GM12878 (cell line): ENCODE measurements at regions of chr2 and their contacts with region 1.

Region 1: GRCh38 chr2:72745679-72746368 is 80.0 kb downstream of the EXOC6B start:
- DNase-seq: no peak
- ATAC-seq: peak; percentile 52; the same call in 2 of the 3 replicates
- H3K4me3 ChIP-seq: no peak overlapping the region
- H3K27ac ChIP-seq: no peak overlapping the region
- H3K4me1 ChIP-seq: no peaks in the 10 kb centered on the region
- H3K27me3 ChIP-seq: no peaks in the 10 kb centered on the region
- CTCF ChIP-seq: peak; percentile 50 to 62 (median 58); a peak in 5 of 6 replicates
- EP300 ChIP-seq: no peak
- POLR2A ChIP-seq: no peak
- RAD21 ChIP-seq: peak; percentile 70

Region 2: GRCh38 chr2:71291398-71291797 is 1454.4 kb before region 1 on chr2:
- CTCF ChIA-PET with region 1: no interaction called
- POLR2A ChIA-PET with region 1: no interaction called
- RAD21 ChIA-PET with region 1: no interaction called
- SMC1A ChIA-PET with region 1: no interaction called
- in situ Hi-C with region 1: no loop called
- intact Hi-C with region 1: no loop called
- DNase-seq: no peak
- ATAC-seq: no peak
- H3K4me3 ChIP-seq: no peak overlapping the region
- H3K27ac ChIP-seq: no peak overlapping the region
- H3K4me1 ChIP-seq: no peaks in the 10 kb centered on the region
- H3K27me3 ChIP-seq: no peaks in the 10 kb centered on the region
- CTCF ChIP-seq: no peak
- EP300 ChIP-seq: no peak
- POLR2A ChIP-seq: no peak
- RAD21 ChIP-seq: no peak

Region 3: GRCh38 chr2:71530641-71531332 is 1215.0 kb before region 1 on chr2:
- CTCF ChIA-PET with region 1: no interaction called
- POLR2A ChIA-PET with region 1: no interaction called
- RAD21 ChIA-PET with region 1: no interaction called
- SMC1A ChIA-PET with region 1: no interaction called
- in situ Hi-C with region 1: loop called (anchors 10 kb)
- intact Hi-C with region 1: no loop called
- DNase-seq: no peak
- ATAC-seq: peak; percentile 87
- H3K4me3 ChIP-seq: no peak overlapping the region
- H3K27ac ChIP-seq: no peak overlapping the region
- H3K4me1 ChIP-seq: no peaks in the 10 kb centered on the region
- H3K27me3 ChIP-seq: peaks cover 0 to 1% of the 10 kb centered on the region in 2 experiments; a peak in 2 of 4 replicates
- CTCF ChIP-seq: peak; percentile 56 to 66 (median 65); a peak in 5 of 6 replicates
- EP300 ChIP-seq: no peak
- POLR2A ChIP-seq: no peak
- RAD21 ChIP-seq: peak; percentile 65

Region 4: DNA sequence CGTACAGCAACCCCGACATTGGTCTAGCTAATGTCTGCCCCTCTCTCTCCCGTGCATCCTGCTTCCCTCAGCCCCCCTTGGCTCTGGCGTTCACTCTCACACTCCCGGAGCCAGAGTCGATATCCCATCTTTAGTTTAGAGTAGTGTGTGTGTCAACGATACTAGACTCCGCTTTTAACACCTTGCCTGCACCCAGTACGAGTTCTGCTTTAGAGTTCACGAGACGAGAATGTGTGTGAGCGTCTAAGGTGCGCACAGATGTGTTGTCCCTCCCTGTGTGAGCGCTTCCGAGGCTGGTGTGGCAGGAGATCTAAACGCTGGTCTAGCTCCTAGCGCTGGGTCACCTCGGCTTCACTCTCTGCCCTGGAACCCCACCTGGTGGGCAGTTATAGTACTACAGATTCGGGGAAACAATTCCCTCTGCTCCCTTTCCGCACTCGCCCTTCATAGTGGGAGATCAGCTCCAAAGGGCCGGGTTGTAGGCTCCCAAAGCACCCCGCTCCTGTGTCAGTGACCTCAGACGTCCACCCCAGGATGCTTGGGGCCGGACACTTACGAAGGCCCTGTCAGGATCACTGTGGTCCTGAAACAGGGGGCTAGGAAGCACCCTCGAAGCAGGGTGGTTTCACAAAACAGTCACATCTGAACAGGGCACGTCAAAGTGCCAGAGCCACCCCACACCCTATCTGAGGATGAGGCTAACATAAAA is 595.5 kb before region 1 on chr2:
- CTCF ChIA-PET with region 1: no interaction called
- POLR2A ChIA-PET with region 1: no interaction called
- RAD21 ChIA-PET with region 1: no interaction called
- SMC1A ChIA-PET with region 1: no interaction called
- in situ Hi-C with region 1: no loop called
- intact Hi-C with region 1: loop called (anchors 2 kb)
- DNase-seq: peak; percentile 5
- ATAC-seq: peak; percentile 92
- H3K4me3 ChIP-seq: no peak overlapping the region
- H3K27ac ChIP-seq: no peak overlapping the region
- H3K4me1 ChIP-seq: no peaks in the 10 kb centered on the region
- H3K27me3 ChIP-seq: peaks cover 14% of the 10 kb centered on the region in 2 experiments; a peak in 3 of 4 replicates
- CTCF ChIP-seq: peak; percentile 68 to 77 (median 73)
- EP300 ChIP-seq: no peak
- POLR2A ChIP-seq: no peak
- RAD21 ChIP-seq: peak; percentile 73

Region 5: GRCh38 chr2:72803151-72803550 is 57.3 kb after region 1 on chr2:
- CTCF ChIA-PET with region 1: no interaction called
- POLR2A ChIA-PET with region 1: no interaction called
- RAD21 ChIA-PET with region 1: no interaction called
- SMC1A ChIA-PET with region 1: no interaction called
- in situ Hi-C with region 1: no loop called
- intact Hi-C with region 1: no loop called
- DNase-seq: no peak
- ATAC-seq: no peak
- H3K4me3 ChIP-seq: no peak overlapping the region
- H3K27ac ChIP-seq: no peak overlapping the region
- H3K4me1 ChIP-seq: no peaks in the 10 kb centered on the region
- H3K27me3 ChIP-seq: no peaks in the 10 kb centered on the region
- CTCF ChIP-seq: no peak
- EP300 ChIP-seq: no peak
- POLR2A ChIP-seq: no peak
- RAD21 ChIP-seq: no peak